WTC11 (cell line): ENCODE measurements at regions of chr11 and their contacts with region 1.

Region 1: DNA sequence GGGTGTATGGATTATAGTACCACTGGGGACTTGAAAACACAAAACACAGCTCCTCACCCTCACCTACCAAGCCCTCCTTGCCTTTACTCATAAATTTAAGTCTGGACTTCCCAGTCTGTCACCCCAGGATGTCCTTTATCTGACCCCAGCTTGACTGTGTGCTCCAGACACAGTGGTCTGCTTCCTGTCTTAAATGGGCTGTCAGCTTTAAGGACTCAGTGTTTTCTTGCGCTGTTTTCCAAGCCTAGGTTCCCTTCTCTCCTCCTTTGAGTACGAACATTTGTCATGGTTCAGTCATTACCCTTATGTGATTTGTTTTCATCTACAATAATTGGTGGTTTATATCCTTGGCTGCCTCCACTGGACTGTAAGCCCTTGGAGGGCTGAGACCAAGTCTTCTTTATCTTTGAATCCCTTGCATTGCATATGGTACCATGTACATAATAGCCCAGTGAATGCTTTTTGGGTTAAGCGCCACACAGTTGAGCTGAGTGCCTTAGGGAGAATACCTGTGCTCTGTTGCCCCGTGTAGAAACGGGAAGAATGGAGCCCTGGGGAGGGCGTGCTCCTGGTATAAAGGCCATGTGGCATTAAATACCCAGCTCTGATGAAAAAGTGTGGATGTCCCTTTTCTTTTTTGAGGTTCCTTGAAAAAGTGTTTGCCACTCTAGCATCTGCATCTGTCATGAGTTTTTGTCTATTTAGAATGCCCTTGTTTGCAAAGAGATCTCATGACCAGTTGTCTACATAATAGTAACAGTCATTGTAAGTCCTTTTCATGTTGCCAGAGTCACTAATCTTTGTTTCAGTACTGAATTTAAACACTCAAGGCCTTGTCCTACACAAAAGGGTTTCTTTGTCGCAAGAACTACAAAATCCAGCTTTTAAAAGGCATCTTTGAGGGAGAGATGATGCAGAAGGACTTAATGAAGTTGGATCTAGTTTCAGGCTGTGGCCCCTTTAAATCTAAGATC is 14.0 kb downstream of the PANX1 start:
- DNase-seq: no peak
- ATAC-seq: peak; percentile 11; the same call in 1 of the 2 replicates
- H3K4me3 Mint-ChIP-seq: no peak overlapping the region; the same call in 1 of the 2 replicates
- H3K27ac Mint-ChIP-seq: peak overlapping the region; percentile 71; the same call in 1 of the 2 replicates
- H3K4me1 Mint-ChIP-seq: peaks cover 71% of the 10 kb centered on the region
- H3K27me3 Mint-ChIP-seq: no peaks in the 10 kb centered on the region
- CTCF ChIP-seq: no peak

Region 2: GRCh38 chr11:94128746-94129511 is 13.7 kb before region 1 on chr11 and contains the start of gene PANX1:
- CTCF ChIA-PET with region 1: interaction called, 3 read pairs
- POLR2A ChIA-PET with region 1: interaction called, 11 read pairs
- DNase-seq: peak; percentile 75
- ATAC-seq: peak; percentile 78
- H3K4me3 Mint-ChIP-seq: no peak within 1 kb of the TSS
- H3K27ac Mint-ChIP-seq: peak within 1 kb of the TSS; percentile 90
- H3K4me1 Mint-ChIP-seq: peaks cover 32% of the 10 kb centered on the region
- H3K27me3 Mint-ChIP-seq: no peaks in the 10 kb centered on the region
- CTCF ChIP-seq: no peak
- total RNA-seq, gene PANX1: 21.9 to 22.9 TPM (median 22.2 TPM) in 3 replicates

Region 3: DNA sequence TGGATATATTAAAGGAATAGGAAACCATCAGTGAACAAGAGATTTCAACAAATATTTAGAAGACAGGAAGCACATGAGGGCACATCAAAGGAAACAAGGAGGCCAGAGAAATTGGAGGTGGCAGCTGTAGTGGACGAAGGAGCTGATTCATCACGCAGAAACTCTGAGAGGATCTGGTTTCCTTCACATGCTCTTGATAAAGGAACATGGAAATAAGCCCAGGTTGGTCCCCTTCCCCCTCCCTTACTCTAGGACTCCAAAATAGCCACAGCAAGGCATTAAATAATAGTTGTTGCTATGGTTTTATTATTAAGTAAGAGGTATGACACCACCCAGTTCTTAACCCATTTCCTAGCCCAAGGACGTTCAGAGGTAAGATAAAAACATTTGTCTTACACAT is 173.1 kb after region 1 on chr11:
- CTCF ChIA-PET with region 1: no interaction called
- POLR2A ChIA-PET with region 1: no interaction called
- DNase-seq: no peak
- ATAC-seq: no peak
- H3K4me3 Mint-ChIP-seq: no peak overlapping the region
- H3K27ac Mint-ChIP-seq: no peak overlapping the region
- H3K4me1 Mint-ChIP-seq: no peaks in the 10 kb centered on the region
- H3K27me3 Mint-ChIP-seq: no peaks in the 10 kb centered on the region; the same call in 1 of the 2 replicates
- CTCF ChIP-seq: no peak

Region 4: DNA sequence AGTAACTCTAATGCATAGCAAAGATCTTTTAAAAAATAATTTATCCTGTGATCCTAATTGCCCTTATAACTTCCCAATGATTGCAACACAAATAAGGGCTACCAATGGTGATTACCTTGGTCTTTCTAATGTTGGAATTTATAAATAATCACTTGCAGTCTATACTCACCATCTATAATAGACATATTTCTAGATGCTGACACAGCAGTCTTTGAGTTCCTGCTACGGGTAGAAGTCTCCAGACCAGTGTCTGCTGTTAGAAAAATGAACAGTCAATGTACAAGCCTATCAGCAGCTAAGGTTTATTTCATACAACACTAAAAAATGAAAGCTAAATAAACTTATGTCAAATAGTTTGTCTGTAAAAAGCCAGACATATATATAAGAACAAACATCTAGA is 303.0 kb after region 1 on chr11:
- CTCF ChIA-PET with region 1: no interaction called
- POLR2A ChIA-PET with region 1: no interaction called
- DNase-seq: no peak
- ATAC-seq: no peak
- H3K4me3 Mint-ChIP-seq: no peak overlapping the region
- H3K27ac Mint-ChIP-seq: no peak overlapping the region
- H3K4me1 Mint-ChIP-seq: peaks cover 6% of the 10 kb centered on the region; the same call in 1 of the 2 replicates
- H3K27me3 Mint-ChIP-seq: no peaks in the 10 kb centered on the region
- CTCF ChIP-seq: no peak

Region 5: DNA sequence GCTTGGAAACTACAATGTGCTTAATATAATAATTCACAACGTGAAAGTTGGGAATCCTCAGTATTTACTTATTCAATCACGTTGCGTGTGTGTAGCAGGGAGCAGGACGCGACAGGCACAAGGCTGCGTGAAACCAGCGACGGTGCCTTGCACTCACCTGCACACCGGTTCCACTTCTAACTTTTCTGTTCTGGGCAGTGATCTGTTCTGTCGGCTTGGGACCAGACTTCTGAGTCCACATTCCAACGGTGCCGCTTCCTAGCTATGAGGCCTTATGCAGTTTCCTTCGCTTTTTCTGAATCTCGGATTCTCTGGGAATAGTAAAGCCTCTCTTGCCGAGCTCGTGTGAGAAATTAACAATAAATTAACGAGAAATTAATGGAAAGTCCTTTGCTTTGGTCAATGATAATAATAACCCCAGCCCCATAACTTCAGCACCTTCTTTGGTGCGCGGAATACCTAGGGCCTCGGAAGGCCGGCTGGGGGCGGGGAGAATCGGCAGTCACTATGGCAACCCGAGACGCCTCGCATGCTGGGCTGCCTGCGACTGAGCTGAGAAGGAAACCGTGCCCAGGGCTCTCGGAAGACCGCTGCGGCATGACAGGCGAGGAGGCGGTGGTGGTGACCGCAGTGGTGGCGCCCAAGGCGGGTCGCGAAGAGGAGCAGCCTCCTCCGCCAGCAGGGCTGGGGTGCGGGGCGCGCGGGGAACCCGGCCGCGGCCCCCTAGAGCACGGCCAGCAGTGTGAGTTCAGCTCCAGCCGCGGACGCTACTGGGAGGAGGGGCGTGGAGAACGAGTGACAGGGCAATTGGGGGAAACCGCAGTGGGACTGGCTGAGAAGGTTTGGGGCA is 369.6 kb after region 1 on chr11 and contains the start of gene C11orf97:
- CTCF ChIA-PET with region 1: no interaction called
- POLR2A ChIA-PET with region 1: no interaction called
- DNase-seq: peak; percentile 86
- ATAC-seq: peak; percentile 99
- H3K4me3 Mint-ChIP-seq: peak within 1 kb of the TSS; percentile 70
- H3K27ac Mint-ChIP-seq: no peak within 1 kb of the TSS
- H3K4me1 Mint-ChIP-seq: peaks cover 5% of the 10 kb centered on the region
- H3K27me3 Mint-ChIP-seq: peaks cover 61% of the 10 kb centered on the region
- CTCF ChIP-seq: no peak
- total RNA-seq, gene C11orf97: not detected in 3 replicates